Activated CD8-positive, alpha-beta T cell treated with anti-CD3 and anti-CD28 coated beads, Interleukin-2, amount 10 ng/mL, durations not matched to agents 7 days and 5 days (primary cell): ENCODE measurements at regions of chr2 and their contacts with region 1.

Region 1: GRCh38 chr2:68925295-68925896 is 27.3 kb downstream of the GKN2 start:
- DNase-seq: peak; percentile 75
- ATAC-seq: peak; percentile 87
- H3K4me3 Mint-ChIP-seq: no peak overlapping the region
- H3K27ac Mint-ChIP-seq: no peak overlapping the region
- H3K4me1 Mint-ChIP-seq: peaks cover 10% of the 10 kb centered on the region
- H3K27me3 Mint-ChIP-seq: peaks cover 3% of the 10 kb centered on the region

Region 2: DNA sequence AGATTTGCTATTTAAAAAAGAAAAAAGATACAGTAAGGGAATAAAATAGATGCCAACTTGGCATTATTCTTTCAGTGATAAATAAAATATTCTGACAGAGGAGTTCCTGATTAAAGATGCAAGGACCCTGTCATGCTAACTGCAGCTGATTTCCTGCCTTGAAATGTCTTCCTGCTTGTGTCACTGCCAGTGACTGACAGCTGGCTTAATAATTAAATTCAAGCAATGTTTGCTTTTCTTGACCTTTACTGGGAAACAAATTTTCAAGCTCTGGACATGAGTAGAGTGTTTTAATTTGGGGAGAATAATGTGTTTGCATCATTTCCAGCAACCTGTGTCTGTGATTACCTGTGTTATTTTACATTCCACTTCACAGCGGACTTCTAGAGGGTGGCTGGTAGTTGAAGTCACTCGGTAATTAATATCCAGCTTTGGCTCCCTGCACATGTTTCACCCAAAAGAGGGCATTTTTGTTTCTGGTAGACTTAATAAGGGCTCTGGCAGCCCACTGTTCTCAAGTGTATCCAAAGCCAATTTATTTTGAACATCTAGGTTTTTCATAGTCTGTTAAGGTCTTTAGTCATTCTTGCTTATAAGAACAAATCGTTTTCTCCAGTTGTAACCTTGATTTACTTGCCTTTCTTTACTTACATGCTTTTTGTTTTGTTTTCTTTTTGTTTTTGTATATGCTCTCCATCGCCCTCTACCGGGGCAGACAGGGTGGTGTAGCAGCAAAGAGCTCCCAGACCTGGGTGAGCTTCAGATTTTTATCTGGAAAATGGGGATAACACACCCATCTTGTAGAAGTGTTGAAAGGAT is 330.5 kb before region 1 on chr2:
- CTCF ChIA-PET with region 1: interaction called, 26 read pairs
- POLR2A ChIA-PET with region 1: no interaction called
- DNase-seq: peak; percentile 71
- ATAC-seq: no peak
- H3K4me3 Mint-ChIP-seq: peak overlapping the region; percentile 3
- H3K27ac Mint-ChIP-seq: peak overlapping the region; percentile 4
- H3K4me1 Mint-ChIP-seq: peaks cover 13% of the 10 kb centered on the region
- H3K27me3 Mint-ChIP-seq: peaks cover 12% of the 10 kb centered on the region

Region 3: GRCh38 chr2:68715353-68716041 is 209.9 kb before region 1 on chr2:
- CTCF ChIA-PET with region 1: interaction called, 68 read pairs
- POLR2A ChIA-PET with region 1: no interaction called
- DNase-seq: peak; percentile 39
- ATAC-seq: no peak
- H3K4me3 Mint-ChIP-seq: no peak overlapping the region
- H3K27ac Mint-ChIP-seq: peak overlapping the region; percentile 85
- H3K4me1 Mint-ChIP-seq: peaks cover 82% of the 10 kb centered on the region
- H3K27me3 Mint-ChIP-seq: peaks cover 3% of the 10 kb centered on the region

Region 4: DNA sequence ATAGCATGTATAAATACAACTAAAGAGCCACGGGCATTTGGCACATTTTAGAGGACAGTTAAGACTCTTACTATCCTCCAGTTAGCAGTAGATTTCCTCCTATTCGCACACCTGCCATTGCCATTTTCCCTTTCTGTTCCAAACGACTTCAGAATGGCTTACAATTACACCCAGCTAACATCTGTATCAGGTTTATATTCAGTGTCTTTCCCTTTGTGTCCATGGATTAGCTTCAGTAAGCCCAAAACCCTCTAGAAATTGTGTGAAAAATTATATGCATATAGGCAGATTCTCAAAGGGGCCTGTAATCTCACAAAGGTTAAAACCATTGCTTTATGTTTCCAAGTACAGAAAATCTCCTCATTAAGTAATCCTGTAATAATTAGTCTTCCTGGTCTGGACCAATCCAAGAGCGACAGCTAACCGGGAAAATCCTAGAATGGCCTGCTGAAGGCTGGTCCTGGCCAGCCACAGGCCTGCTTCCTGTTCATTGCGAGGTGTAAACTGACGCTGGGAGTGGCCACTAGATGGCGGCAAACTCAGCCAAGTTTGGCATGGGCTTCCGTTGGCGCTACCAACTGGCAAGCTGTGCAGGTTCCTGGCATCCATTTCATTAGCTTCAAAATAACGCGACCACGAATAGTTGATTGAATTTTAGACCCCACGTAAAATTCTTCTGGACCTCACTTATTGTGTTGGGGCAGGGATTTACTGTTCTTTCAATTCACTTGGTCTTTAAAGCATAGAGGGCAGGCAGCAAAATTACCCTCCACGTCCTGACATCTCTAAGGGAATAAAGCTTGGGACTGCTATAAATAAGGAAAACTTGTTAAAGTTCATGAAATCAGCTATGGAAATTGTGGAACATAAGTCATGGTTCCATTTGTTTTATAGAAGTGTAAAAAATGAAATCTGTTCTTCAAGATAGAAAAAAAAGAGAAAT is 173.7 kb before region 1 on chr2:
- CTCF ChIA-PET with region 1: interaction called, 74 read pairs
- POLR2A ChIA-PET with region 1: interaction called, 3 read pairs
- DNase-seq: peak; percentile 95
- ATAC-seq: peak; percentile 98
- H3K4me3 Mint-ChIP-seq: peak overlapping the region; percentile 35
- H3K27ac Mint-ChIP-seq: peak overlapping the region; percentile 78
- H3K4me1 Mint-ChIP-seq: peaks cover 87% of the 10 kb centered on the region
- H3K27me3 Mint-ChIP-seq: no peaks in the 10 kb centered on the region

Region 5: GRCh38 chr2:68828887-68829708 is 96.3 kb before region 1 on chr2:
- CTCF ChIA-PET with region 1: interaction called, 14 read pairs
- POLR2A ChIA-PET with region 1: no interaction called
- DNase-seq: peak; percentile 83
- ATAC-seq: peak; percentile 70
- H3K4me3 Mint-ChIP-seq: peak overlapping the region; percentile 71
- H3K27ac Mint-ChIP-seq: peak overlapping the region; percentile 90
- H3K4me1 Mint-ChIP-seq: peaks cover 65% of the 10 kb centered on the region
- H3K27me3 Mint-ChIP-seq: no peaks in the 10 kb centered on the region

Region 6: GRCh38 chr2:68909793-68910674 is 15.4 kb before region 1 on chr2:
- CTCF ChIA-PET with region 1: interaction called, 40 read pairs
- POLR2A ChIA-PET with region 1: no interaction called
- DNase-seq: peak; percentile 84
- ATAC-seq: no peak
- H3K4me3 Mint-ChIP-seq: no peak overlapping the region
- H3K27ac Mint-ChIP-seq: peak overlapping the region; percentile 5
- H3K4me1 Mint-ChIP-seq: peaks cover 37% of the 10 kb centered on the region
- H3K27me3 Mint-ChIP-seq: no peaks in the 10 kb centered on the region

Region 7: GRCh38 chr2:69007169-69007568 is 81.8 kb after region 1 on chr2:
- CTCF ChIA-PET with region 1: no interaction called
- POLR2A ChIA-PET with region 1: no interaction called
- DNase-seq: no peak
- ATAC-seq: no peak
- H3K4me3 Mint-ChIP-seq: no peak overlapping the region
- H3K27ac Mint-ChIP-seq: no peak overlapping the region
- H3K4me1 Mint-ChIP-seq: no peaks in the 10 kb centered on the region
- H3K27me3 Mint-ChIP-seq: peaks cover 42% of the 10 kb centered on the region